HEK293 (cell line): ENCODE measurements at regions of chr1 and their contacts with region 1.

Region 1: GRCh38 chr1:65459397-65459768 is 38.9 kb downstream of the LEPR start:
- H3K4me3 ChIP-seq: no peak overlapping the region
- H3K27ac ChIP-seq: no peak overlapping the region
- H3K4me1 ChIP-seq: no peaks in the 10 kb centered on the region
- CTCF ChIP-seq: no peak

Region 2: GRCh38 chr1:65469889-65470340 is 10.5 kb after region 1 on chr1:
- CTCF ChIA-PET with region 1: interaction called, 19 read pairs
- POLR2A ChIA-PET with region 1: no interaction called
- H3K4me3 ChIP-seq: no peak overlapping the region
- H3K27ac ChIP-seq: peak overlapping the region; percentile 59
- H3K4me1 ChIP-seq: peaks cover 7% of the 10 kb centered on the region
- CTCF ChIP-seq: no peak

Region 3: GRCh38 chr1:65476327-65476726 is 16.9 kb after region 1 on chr1:
- CTCF ChIA-PET with region 1: interaction called, 13 read pairs
- POLR2A ChIA-PET with region 1: no interaction called
- H3K4me3 ChIP-seq: no peak overlapping the region
- H3K27ac ChIP-seq: no peak overlapping the region
- H3K4me1 ChIP-seq: no peaks in the 10 kb centered on the region
- CTCF ChIP-seq: no peak

Region 4: DNA sequence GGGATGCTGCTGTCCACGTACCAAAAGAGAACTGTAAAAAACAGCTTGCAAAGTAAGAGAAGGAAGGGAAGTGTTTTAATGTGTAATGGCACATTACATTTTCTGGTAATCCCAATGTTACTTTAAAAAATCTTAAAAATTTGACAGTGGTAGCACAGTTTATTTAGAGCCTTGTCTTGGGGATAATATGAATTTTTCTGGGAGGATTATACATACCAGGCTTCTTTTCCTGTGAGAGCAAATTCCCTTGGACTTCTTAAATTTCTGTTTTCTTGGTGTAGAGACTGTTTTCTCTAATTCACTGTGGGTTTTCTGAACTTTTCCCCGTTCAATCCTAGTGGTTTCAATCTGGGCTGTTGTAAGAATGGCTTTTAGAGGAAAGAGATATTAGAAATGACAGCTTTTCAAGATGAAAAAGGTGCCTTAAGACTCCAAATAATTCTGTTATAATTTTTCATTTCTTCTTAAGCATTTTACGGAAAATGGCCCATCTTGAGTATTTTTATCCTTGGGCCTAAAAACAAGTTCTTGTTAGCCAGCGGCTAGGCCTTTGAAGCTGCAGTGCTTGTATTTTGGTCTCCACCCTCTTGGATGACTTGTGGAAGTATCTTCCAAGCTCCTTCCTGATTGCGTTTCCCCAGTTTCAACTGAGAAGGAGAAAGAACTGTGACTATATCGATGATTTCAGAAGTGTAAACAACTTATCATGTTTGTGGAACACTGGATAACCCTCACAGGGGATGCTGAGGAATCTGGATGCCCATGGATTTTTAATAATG is 31.0 kb after region 1 on chr1:
- CTCF ChIA-PET with region 1: interaction called, 11 read pairs
- POLR2A ChIA-PET with region 1: no interaction called
- H3K4me3 ChIP-seq: no peak overlapping the region
- H3K27ac ChIP-seq: no peak overlapping the region
- H3K4me1 ChIP-seq: no peaks in the 10 kb centered on the region
- CTCF ChIP-seq: no peak